Caco-2 (cell line): ENCODE measurements at regions of chr1 and their contacts with region 1.

Region 1: DNA sequence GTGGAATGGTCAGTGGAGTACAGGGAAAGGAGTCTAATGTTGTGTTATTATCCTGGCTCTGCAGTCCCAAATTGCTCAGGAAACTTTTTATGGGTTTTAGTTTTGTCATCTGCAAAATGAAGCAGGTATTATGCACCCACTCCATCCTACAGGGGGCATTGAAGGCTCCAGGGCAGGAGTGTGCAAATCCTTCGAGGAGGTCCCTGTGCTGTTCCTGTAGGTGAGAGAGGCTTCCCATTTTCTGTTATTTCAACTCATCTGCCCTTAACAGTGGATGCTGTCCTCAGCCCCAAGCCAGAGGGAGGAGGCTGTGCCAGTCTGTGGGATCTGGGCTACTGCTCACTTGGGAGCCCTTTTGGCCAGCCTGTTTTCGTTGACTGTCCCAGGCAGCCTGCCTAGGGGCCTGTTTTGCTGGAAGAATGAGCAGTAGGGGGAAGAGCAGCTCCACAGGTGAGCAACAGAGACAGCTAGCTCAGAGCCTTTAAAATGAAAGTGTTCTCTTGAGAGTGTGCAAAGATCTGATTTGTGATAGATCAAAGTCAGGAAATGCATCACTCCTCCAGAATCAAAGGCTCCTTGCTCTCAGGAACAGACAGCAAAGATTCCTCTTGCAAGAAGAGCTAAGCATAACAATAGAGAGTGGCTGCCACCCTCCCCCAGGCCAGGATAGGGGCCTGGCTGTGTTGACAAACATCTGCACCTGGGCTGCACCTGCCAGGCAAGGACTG is 317.6 kb upstream of the PROX1 start:
- DNase-seq: peak; percentile 56 to 67
- H3K4me3 ChIP-seq: no peak overlapping the region
- H3K4me3 Mint-ChIP-seq: no peak overlapping the region
- H3K27ac Mint-ChIP-seq: no peak overlapping the region
- H3K4me1 ChIP-seq: peaks cover 11% of the 10 kb centered on the region
- H3K4me1 Mint-ChIP-seq: peaks cover 12% of the 10 kb centered on the region
- H3K27me3 ChIP-seq: no peaks in the 10 kb centered on the region
- H3K27me3 Mint-ChIP-seq: no peaks in the 10 kb centered on the region
- CTCF ChIP-seq: peak; percentile 9 to 21

Region 2: DNA sequence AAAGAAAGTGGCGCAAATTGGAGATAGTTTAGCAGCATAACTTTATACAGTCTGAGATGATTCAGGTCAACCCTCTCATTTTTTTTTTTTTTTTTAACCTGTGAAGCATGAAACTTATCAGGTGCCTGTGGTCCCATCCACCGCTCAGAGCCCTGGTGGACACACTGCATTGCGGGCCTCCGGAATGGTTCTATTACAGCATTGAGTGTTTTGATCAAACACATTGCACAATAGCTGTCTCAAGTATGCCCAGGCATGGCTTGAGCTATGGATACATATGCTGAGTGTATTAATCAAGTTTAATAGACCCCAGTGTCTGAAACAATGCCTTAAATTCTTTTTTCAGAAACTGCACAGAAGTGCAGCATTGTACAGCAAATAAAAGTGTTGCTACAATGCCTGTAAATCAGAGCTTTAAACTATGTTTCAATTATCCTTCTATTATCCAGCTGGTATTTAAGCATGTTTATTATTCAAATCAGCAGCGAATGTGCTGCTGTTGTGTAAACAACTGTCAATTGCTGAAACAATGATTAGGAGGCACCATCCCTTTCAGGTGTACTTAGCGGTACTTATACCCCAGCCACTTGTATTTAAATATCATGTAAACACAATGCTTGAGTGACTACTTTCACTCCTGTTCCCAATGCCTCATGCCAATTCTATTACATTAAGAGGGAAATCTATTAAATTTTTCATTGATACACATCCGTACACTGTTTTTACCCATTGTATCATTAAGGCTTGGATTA is 162.5 kb before region 1 on chr1:
- CTCF ChIA-PET with region 1: no interaction called
- POLR2A ChIA-PET with region 1: no interaction called
- intact Hi-C with region 1: no loop called
- DNase-seq: no peak
- H3K4me3 ChIP-seq: no peak overlapping the region
- H3K4me3 Mint-ChIP-seq: no peak overlapping the region
- H3K27ac Mint-ChIP-seq: no peak overlapping the region
- H3K4me1 ChIP-seq: no peaks in the 10 kb centered on the region
- H3K4me1 Mint-ChIP-seq: no peaks in the 10 kb centered on the region
- H3K27me3 ChIP-seq: no peaks in the 10 kb centered on the region
- H3K27me3 Mint-ChIP-seq: no peaks in the 10 kb centered on the region
- CTCF ChIP-seq: no peak

Region 3: GRCh38 chr1:213750231-213751063 is 80.3 kb after region 1 on chr1:
- CTCF ChIA-PET with region 1: no interaction called
- POLR2A ChIA-PET with region 1: no interaction called
- intact Hi-C with region 1: loop called (anchors 1 kb)
- DNase-seq: peak in 1 of 2 experiments; percentile 12
- H3K4me3 ChIP-seq: no peak overlapping the region
- H3K4me3 Mint-ChIP-seq: no peak overlapping the region
- H3K27ac Mint-ChIP-seq: no peak overlapping the region
- H3K4me1 ChIP-seq: peaks cover 13% of the 10 kb centered on the region; the same call in 1 of the 2 replicates
- H3K4me1 Mint-ChIP-seq: peaks cover 8% of the 10 kb centered on the region
- H3K27me3 ChIP-seq: no peaks in the 10 kb centered on the region; the same call in 1 of the 2 replicates
- H3K27me3 Mint-ChIP-seq: no peaks in the 10 kb centered on the region
- CTCF ChIP-seq: no peak